ENCODE measurements at regions of chr3 and their contacts with region 1.

Region 1: DNA sequence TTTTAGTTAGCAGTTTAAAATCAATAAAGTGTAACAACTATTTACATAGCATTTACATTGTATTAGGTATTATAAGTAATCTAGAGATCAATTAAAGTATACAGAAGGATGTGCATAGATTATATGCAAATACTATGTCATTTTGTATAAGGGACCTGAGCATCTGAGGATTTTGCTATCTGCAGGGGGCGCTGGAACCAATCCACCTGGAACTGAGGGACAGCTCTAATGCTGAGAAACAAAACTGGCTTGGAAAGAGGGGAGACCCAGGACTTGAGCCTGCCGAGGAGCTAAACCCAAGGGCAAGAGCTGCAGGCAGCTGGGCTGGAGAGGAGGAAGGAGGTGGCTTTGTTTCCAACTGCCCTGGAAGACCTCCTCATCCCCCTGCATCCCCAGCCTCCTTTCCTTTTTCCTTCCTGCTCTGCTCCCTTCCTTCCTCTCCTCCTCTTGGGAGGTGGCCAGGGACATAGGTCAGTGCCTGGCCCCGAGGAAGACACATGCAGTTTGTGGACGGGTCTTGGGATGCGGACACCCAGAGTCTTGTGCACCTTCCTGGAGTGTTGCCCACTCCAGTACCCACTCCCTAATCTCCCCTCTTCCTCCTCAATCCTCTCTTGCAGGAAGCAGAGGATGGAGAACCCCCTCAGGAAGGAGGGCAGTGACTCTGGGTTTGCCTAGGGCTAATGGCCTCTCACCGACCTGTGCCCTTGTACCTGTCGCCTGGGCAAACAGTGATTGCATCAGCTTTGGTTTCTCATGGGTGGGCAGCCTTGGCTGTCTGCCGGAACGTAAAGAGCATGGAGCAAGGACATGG is 828 bp upstream of the RTP3 start:
- DNase-seq: no peak
- H3K4me3 ChIP-seq: no peak overlapping the region
- H3K27ac ChIP-seq: no peak overlapping the region
- H3K4me1 ChIP-seq: peaks cover 10 to 36% (median 21%) of the 10 kb centered on the region in 6 donors
- H3K27me3 ChIP-seq: no peaks in the 10 kb centered on the region
- CTCF ChIP-seq: peak in 8 of 11 experiments; percentile 12 to 46 (median 36)
- POLR2A ChIP-seq: no peak

Region 2: GRCh38 chr3:46558184-46559043 is 61.5 kb after region 1 on chr3:
- intact Hi-C with region 1: loop called (anchors 2 kb)
- DNase-seq: peak; percentile 89
- H3K4me3 ChIP-seq: peak overlapping the region in 6 of 8 donors; percentile 1 to 59 (median 31)
- H3K27ac ChIP-seq: peak overlapping the region in 6 of 8 donors; percentile 31 to 66 (median 51)
- H3K4me1 ChIP-seq: peaks cover 8 to 20% (median 13%) of the 10 kb centered on the region in 6 donors
- H3K27me3 ChIP-seq: peaks cover 0 to 10% (median 0%) of the 10 kb centered on the region in 7 donors
- CTCF ChIP-seq: peak; percentile 62 to 88 (median 73)
- POLR2A ChIP-seq: no peak